GM13976 (cell line): ENCODE measurements at regions of chr1 and their contacts with region 1.

Region 1: GRCh38 chr1:26145041-26145959 is 13.6 kb upstream of the FAM110D start:
- DNase-seq: peak; percentile 80
- CTCF ChIP-seq: peak; percentile 47

Region 2: DNA sequence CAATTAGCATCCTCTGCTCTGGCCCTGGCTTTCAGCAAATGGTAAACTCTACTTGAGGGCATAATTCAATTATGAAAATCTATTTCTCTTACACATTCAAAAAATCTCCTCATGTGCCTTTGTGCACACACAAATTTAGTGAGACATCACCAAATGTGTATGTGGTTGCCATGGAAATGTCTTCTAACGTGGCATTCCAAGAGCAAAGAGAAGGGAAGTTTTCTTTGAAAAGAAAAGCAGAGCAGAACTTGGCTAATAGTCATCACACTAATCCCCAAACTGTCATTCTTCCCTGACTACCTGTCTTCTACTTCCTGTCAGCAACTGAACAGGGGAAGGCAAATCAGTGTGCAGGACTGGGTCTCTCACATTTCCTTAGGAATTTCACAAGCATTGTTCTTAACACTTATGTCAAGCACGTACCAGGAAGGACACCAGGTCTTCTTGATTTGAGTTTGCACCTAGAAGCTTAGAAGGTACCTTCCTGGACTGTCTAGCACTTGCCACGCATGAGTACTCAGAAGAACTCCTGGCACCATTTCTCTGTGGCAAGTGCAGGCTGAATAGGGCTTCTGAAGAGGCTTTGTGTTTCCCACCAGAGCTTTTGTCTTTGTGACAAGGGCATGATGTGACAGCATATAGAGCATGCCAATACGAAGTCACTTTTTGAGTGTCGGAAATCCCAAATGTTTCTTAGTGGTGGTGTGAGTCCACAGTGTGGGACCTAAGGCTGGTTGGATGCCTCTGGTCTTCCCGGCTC is 496.4 kb before region 1 on chr1:
- in situ Hi-C with region 1: no loop called
- DNase-seq: no peak
- CTCF ChIP-seq: no peak

Region 3: DNA sequence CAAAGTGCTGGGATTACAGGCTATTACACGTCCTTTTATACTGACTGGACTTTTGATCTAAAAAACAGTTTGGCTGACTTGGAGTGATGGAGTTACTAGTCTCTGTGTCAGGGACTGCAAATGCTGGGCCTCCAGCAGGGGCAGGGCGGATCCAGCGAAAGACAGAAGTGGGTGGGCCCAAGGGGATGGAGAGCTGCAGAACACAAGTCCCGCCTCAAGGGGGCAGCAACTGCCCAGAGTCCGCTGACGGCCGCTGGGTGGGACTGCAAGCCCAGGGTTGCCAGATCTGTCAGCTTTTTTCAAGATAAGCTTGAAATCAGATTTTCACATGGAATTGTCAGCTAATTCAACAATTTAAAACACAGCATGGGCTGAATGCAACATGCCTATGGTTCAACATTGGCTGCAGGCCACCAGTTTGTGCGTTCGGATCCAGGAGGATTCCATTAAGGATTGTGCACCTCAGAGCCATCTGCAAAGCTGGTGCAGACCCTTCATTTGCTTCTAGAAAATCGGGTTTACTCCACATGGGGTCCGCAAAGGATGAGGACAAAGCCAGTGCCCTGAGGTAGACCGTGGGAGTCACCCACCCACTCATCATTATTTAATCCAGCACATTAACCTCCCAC is 249.8 kb before region 1 on chr1:
- in situ Hi-C with region 1: no loop called
- DNase-seq: peak; percentile 95
- CTCF ChIP-seq: peak; percentile 94

Region 4: DNA sequence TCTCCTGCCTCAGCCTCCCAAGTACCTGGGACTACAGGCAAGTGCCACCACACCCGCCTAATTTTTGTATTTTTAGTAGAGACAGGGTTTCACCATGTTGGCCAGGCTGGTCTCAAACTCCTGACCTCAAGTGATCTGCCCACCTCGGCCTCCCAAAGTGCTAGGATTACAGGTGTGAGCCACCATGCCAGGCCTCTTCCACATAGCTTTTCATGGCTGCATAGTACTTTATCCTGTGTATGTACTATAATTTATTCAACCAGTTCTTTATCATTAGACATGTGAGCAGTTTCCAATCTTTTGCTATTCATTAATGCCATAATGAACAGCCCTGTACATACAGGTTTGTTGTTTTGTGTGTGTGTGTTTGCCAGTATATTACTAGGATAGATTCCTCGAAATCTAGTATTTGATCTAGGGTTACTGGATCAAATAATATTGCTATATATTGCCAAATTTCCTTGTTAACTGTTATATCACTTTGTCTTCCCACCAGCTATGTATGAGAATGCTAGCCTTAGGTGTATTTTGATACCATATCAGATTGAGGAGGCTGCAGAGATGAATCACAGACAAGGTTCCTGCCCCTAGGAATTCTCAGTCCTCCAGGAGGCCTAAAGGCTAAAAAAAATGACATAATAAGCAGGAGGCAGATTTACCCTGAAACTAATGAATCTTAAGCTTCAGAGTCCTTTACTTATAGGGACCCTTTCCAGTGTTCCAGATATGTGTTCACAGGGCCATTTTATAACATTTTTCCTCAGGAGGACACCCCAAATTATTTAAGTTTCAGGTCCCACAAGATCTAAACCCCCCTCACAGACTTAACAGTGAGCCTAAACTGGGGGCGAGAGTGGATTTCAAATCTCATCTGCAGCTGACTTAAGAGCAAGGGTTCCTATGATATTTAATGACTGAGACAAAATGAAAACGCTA is 35.8 kb before region 1 on chr1:
- in situ Hi-C with region 1: loop called (anchors 5 kb)
- DNase-seq: no peak
- CTCF ChIP-seq: no peak